ENCODE measurements at regions of chr18 and their contacts with region 1.

Region 1: GRCh38 chr18:45384137-45384961 is 230.9 kb upstream of the SLC14A2 start:
- DNase-seq: peak; percentile 18 to 53
- ATAC-seq: peak; percentile 65 to 78 (median 68)
- H3K4me3 ChIP-seq: no peak overlapping the region
- H3K27ac ChIP-seq: no peak overlapping the region
- H3K4me1 ChIP-seq: peaks cover 0 to 2% (median 0%) of the 10 kb centered on the region in 9 donors
- H3K27me3 ChIP-seq: peaks cover 0 to 15% (median 0%) of the 10 kb centered on the region in 7 donors
- CTCF ChIP-seq: peak; percentile 43 to 81 (median 68)

Region 2: GRCh38 chr18:43620936-43621335 is 1763.4 kb before region 1 on chr18:
- intact Hi-C with region 1: loop called in 5 of 10 experiments (anchors 5 to 10 kb)
- DNase-seq: no peak
- ATAC-seq: peak in 3 of 8 donors; percentile 27 to 53 (median 45)
- H3K4me3 ChIP-seq: no peak overlapping the region
- H3K27ac ChIP-seq: no peak overlapping the region
- H3K4me1 ChIP-seq: no peaks in the 10 kb centered on the region
- H3K27me3 ChIP-seq: no peaks in the 10 kb centered on the region
- CTCF ChIP-seq: peak in 8 of 9 donors; percentile 19 to 73 (median 61)

Region 3: DNA sequence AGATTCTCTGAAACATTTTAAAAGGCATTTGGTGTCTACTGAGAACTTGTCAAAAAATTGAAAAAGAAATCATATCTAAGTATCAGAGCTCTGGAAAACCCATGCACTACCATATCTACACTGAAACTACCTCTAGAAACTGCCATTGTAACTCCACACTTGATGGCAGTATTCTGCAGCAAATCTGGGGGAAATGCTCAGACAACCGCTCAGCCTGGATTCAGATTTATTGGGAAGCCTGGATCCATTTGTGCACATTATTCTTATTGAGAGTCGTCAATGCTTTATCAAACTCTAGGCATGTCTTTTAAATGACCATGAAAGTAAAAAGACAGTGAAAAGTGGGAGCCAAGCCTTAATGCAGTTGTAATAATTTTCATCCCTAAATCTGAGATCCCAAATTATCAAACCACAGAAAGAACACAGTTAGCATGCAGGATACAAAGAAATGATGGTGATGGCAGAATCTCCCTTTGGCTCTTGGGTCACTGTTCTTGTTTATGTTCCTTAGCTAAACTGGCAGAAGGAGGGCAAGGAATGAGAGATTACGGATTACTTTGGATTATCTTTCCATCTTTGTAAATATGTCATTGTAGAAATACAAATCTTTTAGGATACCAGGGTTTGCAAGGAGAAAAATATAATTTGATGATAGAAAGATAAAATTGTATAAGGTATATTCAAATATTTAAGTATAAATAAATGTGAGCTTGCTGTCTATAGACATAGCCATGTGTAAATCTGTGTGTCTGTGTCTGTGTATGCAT is 1594.9 kb before region 1 on chr18:
- intact Hi-C with region 1: loop called in 1 of 10 experiments (anchors 10 kb)
- DNase-seq: peak in 1 of 2 donors; percentile 7
- ATAC-seq: peak in 5 of 8 donors; percentile 42 to 77 (median 55)
- H3K4me3 ChIP-seq: no peak overlapping the region
- H3K27ac ChIP-seq: no peak overlapping the region
- H3K4me1 ChIP-seq: peaks cover 0 to 3% (median 0%) of the 10 kb centered on the region in 9 donors
- H3K27me3 ChIP-seq: no peaks in the 10 kb centered on the region
- CTCF ChIP-seq: peak in 7 of 9 donors; percentile 9 to 65 (median 47)

Region 4: DNA sequence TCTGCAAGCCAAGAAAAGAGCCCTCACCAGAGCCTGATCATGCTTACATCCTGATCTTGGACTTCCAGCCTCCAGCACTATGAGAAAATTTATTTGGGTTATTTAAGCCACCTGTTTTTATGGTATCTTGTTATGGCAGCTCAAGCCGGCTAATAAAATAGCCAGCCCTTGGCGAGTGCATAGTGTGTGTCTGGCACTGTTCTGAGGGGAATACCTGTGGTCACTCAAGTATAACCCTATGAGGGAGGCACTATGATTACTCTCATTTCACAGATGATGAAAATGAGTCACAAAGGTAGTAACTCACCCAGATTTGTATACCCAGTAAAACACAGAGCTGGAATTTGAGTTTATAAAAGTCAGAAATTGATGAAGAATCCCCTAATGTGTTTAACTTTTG is 1260.6 kb before region 1 on chr18:
- intact Hi-C with region 1: loop called in 1 of 10 experiments (anchors 10 kb)
- DNase-seq: no peak
- ATAC-seq: no peak
- H3K4me3 ChIP-seq: no peak overlapping the region
- H3K27ac ChIP-seq: no peak overlapping the region
- H3K4me1 ChIP-seq: no peaks in the 10 kb centered on the region
- H3K27me3 ChIP-seq: no peaks in the 10 kb centered on the region
- CTCF ChIP-seq: no peak

Region 5: DNA sequence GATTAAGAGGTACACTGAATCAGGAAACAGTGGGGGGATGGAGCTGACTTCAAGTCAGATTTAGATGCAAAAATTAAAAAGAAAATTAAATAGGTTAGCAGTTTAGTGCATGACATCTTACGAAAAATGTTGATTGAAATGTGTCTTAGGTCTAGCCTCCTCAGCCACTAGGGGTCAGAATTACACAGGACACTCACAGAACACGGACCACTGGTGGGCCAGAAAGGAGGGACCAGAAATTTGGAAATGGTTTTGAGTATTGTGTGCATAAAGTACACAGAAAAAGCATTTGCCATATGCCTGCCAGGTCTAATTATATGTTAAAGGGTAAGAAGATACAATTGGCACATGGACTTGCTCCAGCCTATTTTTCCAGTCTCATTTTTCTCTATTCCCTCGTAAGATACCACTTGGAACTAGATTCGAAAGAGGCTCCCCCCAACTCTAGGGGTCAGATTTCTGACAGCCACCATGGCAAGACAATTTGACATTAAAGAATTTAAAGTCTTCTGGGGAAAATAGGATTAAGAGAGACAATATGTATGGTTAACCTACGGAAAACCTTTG is 1253.9 kb before region 1 on chr18:
- intact Hi-C with region 1: loop called in 4 of 10 experiments (anchors 10 kb)
- DNase-seq: peak in 1 of 2 donors; percentile 21
- ATAC-seq: peak in 4 of 8 donors; percentile 34 to 53 (median 48)
- H3K4me3 ChIP-seq: no peak overlapping the region
- H3K27ac ChIP-seq: no peak overlapping the region
- H3K4me1 ChIP-seq: no peaks in the 10 kb centered on the region
- H3K27me3 ChIP-seq: no peaks in the 10 kb centered on the region
- CTCF ChIP-seq: peak; percentile 40 to 77 (median 64)

Region 6: GRCh38 chr18:44909191-44909719 is 475.1 kb before region 1 on chr18:
- intact Hi-C with region 1: loop called in 1 of 10 experiments (anchors 10 kb)
- DNase-seq: peak in 1 of 2 donors; percentile 30
- ATAC-seq: peak in 3 of 8 donors; percentile 26 to 42 (median 33)
- H3K4me3 ChIP-seq: no peak overlapping the region
- H3K27ac ChIP-seq: no peak overlapping the region
- H3K4me1 ChIP-seq: peaks cover 0 to 12% (median 7%) of the 10 kb centered on the region in 9 donors
- H3K27me3 ChIP-seq: no peaks in the 10 kb centered on the region
- CTCF ChIP-seq: no peak

Region 7: DNA sequence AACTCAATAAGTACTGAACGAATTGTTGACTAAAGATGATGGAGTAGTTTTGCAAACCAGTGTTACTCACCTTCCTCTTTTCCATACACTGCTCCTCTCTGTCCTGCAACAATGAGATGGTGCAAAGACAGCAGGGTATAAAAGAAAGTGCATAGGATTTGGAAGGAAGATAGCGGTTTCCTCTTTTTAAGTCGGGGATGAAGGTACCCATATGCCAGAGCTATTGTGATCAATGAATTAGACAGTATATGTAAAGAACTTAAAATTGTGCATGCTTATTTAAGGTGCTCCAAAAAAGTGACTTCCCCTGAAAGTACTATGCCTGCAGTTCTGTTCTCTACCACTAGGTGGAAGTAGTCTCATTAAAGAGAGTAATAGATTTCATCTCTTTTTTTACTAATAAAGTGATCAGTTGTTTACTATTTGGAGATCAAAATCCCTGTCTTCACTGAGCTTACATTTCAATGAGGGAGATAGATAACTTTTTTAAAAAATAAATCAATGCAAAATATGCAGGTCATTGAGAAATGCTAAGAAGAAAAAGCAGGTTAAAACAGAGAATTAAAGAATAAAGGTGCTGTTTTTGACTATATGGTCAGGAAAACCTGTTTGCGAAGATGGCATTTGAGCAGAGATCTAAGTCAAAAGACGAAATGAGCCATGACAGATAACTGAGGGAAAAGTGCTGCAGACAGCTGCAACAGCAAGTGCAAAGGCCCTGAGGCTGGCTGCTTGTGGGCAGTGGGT is 108.8 kb before region 1 on chr18:
- intact Hi-C with region 1: loop called in 4 of 10 experiments (anchors 2 to 10 kb)
- DNase-seq: no peak
- ATAC-seq: no peak
- H3K4me3 ChIP-seq: no peak overlapping the region
- H3K27ac ChIP-seq: no peak overlapping the region
- H3K4me1 ChIP-seq: no peaks in the 10 kb centered on the region
- H3K27me3 ChIP-seq: no peaks in the 10 kb centered on the region
- CTCF ChIP-seq: peak; percentile 52 to 86 (median 73)

Region 8: GRCh38 chr18:45320724-45321123 is 63.6 kb before region 1 on chr18:
- intact Hi-C with region 1: no loop called
- DNase-seq: no peak
- ATAC-seq: peak in 3 of 8 donors; percentile 9 to 38 (median 12)
- H3K4me3 ChIP-seq: no peak overlapping the region
- H3K27ac ChIP-seq: no peak overlapping the region
- H3K4me1 ChIP-seq: peaks cover 0 to 22% (median 7%) of the 10 kb centered on the region in 9 donors
- H3K27me3 ChIP-seq: no peaks in the 10 kb centered on the region
- CTCF ChIP-seq: no peak